ENCODE measurements at regions of chr16 and their contacts with region 1.

Region 1: GRCh38 chr16:64887651-64888050 is 234.2 kb downstream of the CDH11 start:
- DNase-seq: no peak
- ATAC-seq: no peak

Region 2: GRCh38 chr16:63183743-63184142 is 1703.9 kb before region 1 on chr16:
- intact Hi-C with region 1: loop called (anchors 5 kb)
- DNase-seq: no peak
- ATAC-seq: no peak

Region 3: DNA sequence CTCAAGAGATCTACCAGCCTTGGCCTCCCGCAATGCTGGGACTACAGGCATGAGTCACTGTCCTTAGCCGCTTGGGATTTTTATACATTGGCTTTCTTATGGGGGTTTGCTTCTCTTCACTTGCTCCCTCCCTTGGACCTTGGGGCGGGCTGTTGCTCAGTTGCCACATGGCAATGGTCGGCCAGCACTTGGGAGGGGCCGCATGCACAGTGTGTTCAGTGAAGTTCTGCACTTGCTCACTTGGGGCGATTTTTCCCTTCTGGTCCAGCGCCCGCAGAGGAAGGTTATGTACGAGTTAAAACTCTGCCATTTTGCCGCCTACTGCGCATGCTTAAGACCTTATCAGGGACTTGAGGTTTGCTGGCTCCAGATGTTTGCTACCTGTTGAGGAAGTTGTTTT is 1483.9 kb before region 1 on chr16:
- intact Hi-C with region 1: no loop called
- DNase-seq: no peak
- ATAC-seq: no peak

Region 4: GRCh38 chr16:64762211-64762610 is 125.4 kb before region 1 on chr16:
- intact Hi-C with region 1: no loop called
- DNase-seq: no peak
- ATAC-seq: no peak